PC-3 (cell line): ENCODE measurements at regions of chr2 and their contacts with region 1.

Region 1: DNA sequence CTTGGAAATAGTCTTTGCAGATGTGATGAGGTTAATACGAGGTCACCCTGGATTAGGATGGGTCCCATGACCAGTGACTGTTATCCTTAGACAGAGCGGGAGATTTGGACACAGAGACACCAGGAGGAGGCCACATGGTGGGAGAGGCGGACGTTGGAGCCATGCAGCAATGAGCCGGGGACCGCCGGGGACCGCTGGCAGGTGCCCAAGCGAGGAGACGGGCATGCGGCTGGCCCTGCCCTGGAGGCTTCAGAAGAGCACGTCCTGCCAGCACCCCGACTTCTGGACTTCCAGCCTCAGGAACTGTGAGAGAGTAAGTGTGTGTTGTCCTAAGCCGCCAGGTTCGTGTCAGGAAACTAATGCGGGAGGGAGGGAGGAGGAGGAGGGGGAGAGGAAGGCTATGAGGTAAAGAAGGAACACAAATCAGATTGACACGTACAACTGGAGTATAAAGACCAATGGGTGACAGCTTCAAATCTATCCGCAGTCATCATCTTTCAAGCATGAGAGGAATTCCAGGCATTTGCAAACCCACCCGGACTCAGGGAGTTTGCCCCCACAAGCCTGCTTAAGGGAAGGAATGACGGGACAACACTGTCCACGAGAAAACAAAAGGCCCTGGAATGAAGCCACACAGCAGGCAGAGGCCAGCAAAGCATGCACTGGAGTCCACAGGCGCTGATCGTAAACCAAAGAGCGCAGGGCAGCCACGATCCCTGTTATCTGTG is 11.6 kb upstream of the BOK start:
- DNase-seq: no peak
- ATAC-seq: no peak
- H3K4me3 ChIP-seq: no peak overlapping the region
- H3K27ac ChIP-seq: no peak overlapping the region
- H3K4me1 ChIP-seq: peaks cover 11% of the 10 kb centered on the region
- H3K27me3 ChIP-seq: no peaks in the 10 kb centered on the region
- CTCF ChIP-seq: no peak

Region 2: GRCh38 chr2:241598480-241598879 is 51.5 kb after region 1 on chr2:
- CTCF ChIA-PET with region 1: interaction called, 6 read pairs
- POLR2A ChIA-PET with region 1: no interaction called
- intact Hi-C with region 1: loop called (anchors 1 kb)
- DNase-seq: peak; percentile 46
- ATAC-seq: peak; percentile 71
- H3K4me3 ChIP-seq: no peak overlapping the region
- H3K27ac ChIP-seq: no peak overlapping the region
- H3K4me1 ChIP-seq: no peaks in the 10 kb centered on the region
- H3K27me3 ChIP-seq: no peaks in the 10 kb centered on the region
- CTCF ChIP-seq: peak; percentile 55

Region 3: DNA sequence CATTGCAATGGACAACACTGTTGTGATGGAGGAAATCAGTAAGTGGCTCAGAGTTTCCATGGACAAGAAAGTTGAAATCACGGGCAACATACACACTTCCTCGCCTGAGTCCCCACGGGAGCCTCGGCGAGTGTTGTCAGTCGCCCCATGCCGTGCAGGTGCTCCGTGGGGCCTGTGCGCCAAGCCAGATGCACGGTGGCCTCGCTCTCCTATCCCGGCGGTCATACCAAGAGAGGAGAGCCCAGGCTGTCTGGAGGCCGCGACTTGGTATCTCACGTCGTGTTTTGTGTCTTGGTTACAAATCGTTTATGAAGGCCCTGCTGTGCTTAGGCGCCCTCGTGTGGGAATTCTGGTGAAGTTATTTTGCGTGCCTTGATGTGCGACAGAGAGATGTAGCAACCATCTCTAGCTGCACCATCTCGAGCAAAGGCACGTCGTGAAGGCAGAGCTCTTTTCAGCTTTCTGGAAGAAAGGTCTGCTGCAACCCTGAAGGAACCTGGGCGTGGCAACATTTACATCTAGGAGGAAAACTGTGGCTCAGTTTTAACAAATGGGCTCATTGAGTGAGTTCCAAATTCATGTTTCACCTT is 112.3 kb after region 1 on chr2:
- CTCF ChIA-PET with region 1: interaction called, 10 read pairs
- POLR2A ChIA-PET with region 1: no interaction called
- intact Hi-C with region 1: loop called (anchors 1 kb)
- DNase-seq: peak; percentile 49
- ATAC-seq: peak; percentile 40; the same call in 1 of the 2 replicates
- H3K4me3 ChIP-seq: no peak overlapping the region
- H3K27ac ChIP-seq: no peak overlapping the region
- H3K4me1 ChIP-seq: peaks cover 2% of the 10 kb centered on the region; the same call in 1 of the 2 replicates
- H3K27me3 ChIP-seq: no peaks in the 10 kb centered on the region
- CTCF ChIP-seq: peak; percentile 64

Region 4: GRCh38 chr2:241702132-241703031 is 155.4 kb after region 1 on chr2:
- CTCF ChIA-PET with region 1: no interaction called
- POLR2A ChIA-PET with region 1: no interaction called
- intact Hi-C with region 1: no loop called
- DNase-seq: peak; percentile 73
- ATAC-seq: peak; percentile 74
- H3K4me3 ChIP-seq: peak overlapping the region; percentile 78
- H3K27ac ChIP-seq: peak overlapping the region; percentile 89; the same call in 1 of the 2 replicates
- H3K4me1 ChIP-seq: peaks cover 5% of the 10 kb centered on the region; the same call in 1 of the 2 replicates
- H3K27me3 ChIP-seq: no peaks in the 10 kb centered on the region
- CTCF ChIP-seq: peak; percentile 56